ENCODE measurements at regions of chr12 and their contacts with region 1.

Region 1: GRCh38 chr12:480831-481816 is 21.4 kb downstream of the B4GALNT3 start:
- DNase-seq: no peak
- H3K4me3 ChIP-seq: no peak overlapping the region
- H3K27ac ChIP-seq: no peak overlapping the region
- H3K4me1 ChIP-seq: no peaks in the 10 kb centered on the region
- CTCF ChIP-seq: no peak

Region 2: GRCh38 chr12:467591-467990 is 13.5 kb before region 1 on chr12:
- CTCF ChIA-PET with region 1: no interaction called
- POLR2A ChIA-PET with region 1: interaction called, 10 read pairs
- intact Hi-C with region 1: no loop called
- DNase-seq: no peak
- H3K4me3 ChIP-seq: no peak overlapping the region
- H3K27ac ChIP-seq: no peak overlapping the region
- H3K4me1 ChIP-seq: no peaks in the 10 kb centered on the region
- CTCF ChIP-seq: no peak

Region 3: GRCh38 chr12:751192-751998 is 270.3 kb after region 1 on chr12:
- CTCF ChIA-PET with region 1: no interaction called
- POLR2A ChIA-PET with region 1: no interaction called
- intact Hi-C with region 1: no loop called
- DNase-seq: peak; percentile 99
- H3K4me3 ChIP-seq: peak overlapping the region; percentile 87
- H3K27ac ChIP-seq: peak overlapping the region; percentile 90
- H3K4me1 ChIP-seq: peaks cover 39% of the 10 kb centered on the region
- CTCF ChIP-seq: peak; percentile 88

Measured in OCI-LY7 (cell line).